Sciatic nerve (tissue), 2 donors: ENCODE measurements at regions of chr10 and their contacts with region 1.

Region 1: GRCh38 chr10:60816628-60817397 is 38.5 kb downstream of the CDK1 start:
- DNase-seq: no peak
- ATAC-seq: peak; percentile 97

Region 2: GRCh38 chr10:60964257-60965235 is 147.7 kb after region 1 on chr10:
- intact Hi-C with region 1: loop called (anchors 10 kb)
- DNase-seq: peak; percentile 74
- ATAC-seq: peak; percentile 90

Region 3: DNA sequence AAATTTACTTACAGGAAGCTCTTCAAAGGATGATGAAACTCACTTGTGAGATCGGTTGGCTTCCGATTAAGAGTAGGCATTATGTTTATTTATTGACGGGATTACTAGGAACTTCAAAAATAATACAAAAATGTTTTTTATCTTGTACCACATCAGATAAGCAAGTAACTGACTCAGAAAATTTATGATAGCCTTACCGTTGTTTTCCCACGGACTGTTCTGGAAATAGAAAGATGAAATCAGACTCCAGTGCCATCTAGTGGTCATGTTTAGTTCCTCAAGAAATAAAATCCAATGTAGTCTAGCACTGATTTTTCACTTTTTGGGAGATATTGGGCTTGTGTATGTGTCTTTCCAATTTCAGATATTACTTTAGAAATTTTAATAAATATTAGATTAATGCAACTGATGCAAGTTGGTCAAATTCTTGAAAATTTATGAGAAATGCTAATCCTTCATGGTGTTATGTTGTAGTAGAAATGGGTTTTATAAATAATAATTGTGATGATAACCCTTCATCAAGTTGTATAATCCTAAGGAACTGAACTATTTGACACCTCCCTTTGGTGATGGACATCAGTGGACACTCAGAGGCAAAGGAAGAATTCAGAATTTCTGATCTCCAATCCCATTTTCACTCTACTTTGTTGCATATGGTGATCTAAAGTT is 467.5 kb after region 1 on chr10:
- intact Hi-C with region 1: loop called (anchors 10 kb)
- DNase-seq: no peak
- ATAC-seq: peak; percentile 74